Tibial artery (tissue), 4 donors: ENCODE measurements at regions of chr1 and their contacts with region 1.

Region 1: DNA sequence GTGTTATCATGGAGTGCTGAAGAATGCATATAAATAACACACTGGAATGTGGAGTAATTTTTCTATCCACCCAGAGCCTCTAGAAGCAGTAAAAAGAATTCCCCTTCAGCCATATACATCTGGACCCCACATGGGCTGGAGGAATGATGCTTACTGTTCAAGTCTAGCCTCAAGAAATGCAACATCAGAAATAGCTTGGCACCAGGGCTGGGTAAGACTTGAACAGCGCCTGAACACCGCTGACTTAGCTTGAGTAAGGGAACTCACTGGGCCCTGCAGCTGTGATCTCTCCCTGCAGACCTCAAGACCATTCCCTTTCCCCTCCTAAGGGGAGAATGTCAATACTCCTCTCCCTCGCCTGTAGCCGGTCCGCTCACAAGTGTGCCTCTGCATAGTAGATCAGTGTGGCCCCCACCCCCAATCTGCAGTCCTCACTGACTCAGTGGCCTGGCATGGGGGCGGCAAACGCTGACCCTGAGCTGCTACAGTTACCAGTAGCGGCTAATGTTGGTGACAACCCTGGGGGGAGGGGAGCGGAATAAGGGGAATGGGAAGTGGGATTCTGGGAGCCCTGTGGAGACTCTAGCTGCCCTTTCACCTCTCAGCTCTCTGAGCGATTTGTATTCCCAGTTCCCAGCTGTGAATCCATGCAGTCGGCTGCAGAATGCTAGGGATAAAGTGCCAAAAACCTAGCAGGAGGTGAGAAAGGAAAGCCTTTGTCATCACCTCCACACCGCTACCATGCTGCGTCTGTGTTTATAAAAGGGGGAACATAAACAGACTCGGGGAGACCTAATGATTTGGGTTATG is 483.9 kb downstream of the DISC1 start:
- DNase-seq: no peak
- H3K4me3 ChIP-seq: no peak overlapping the region
- H3K27ac ChIP-seq: no peak overlapping the region
- H3K4me1 ChIP-seq: peaks cover 0 to 18% (median 0%) of the 10 kb centered on the region in 4 donors
- H3K27me3 ChIP-seq: no peaks in the 10 kb centered on the region
- CTCF ChIP-seq: no peak

Region 2: DNA sequence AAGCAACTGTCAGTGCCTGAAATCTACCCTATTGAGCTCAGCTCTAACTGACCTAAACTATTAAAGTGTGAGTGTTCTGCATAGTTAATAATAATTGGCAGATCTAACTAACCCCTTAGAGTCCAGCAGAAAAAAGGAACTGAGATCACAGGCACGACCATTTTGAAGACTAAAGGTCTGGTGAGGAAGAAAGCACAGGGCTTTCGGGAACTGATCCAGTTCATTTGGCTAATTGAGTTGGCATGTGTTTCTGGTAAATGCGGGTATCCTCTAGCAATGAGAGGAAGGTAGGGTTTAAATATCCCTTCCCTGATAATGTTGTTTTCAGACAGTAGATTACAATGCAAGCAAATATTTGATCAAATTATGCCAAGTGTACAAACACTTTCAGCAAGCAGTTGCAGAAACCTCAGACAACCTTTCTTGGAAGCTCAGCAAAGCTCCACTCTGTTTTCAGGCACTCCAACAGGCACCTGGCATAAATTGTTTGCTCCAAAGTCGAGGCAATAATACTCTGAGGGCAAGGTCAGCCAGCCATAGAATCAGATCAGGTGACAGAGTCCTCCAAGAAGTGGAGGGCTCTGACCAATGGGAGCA is 1604.2 kb after region 1 on chr1:
- intact Hi-C with region 1: loop called (anchors 10 kb)
- DNase-seq: no peak
- H3K4me3 ChIP-seq: no peak overlapping the region
- H3K27ac ChIP-seq: no peak overlapping the region
- H3K4me1 ChIP-seq: no peaks in the 10 kb centered on the region
- H3K27me3 ChIP-seq: no peaks in the 10 kb centered on the region
- CTCF ChIP-seq: no peak